ENCODE measurements at regions of chrX and their contacts with region 1.

Region 1: GRCh38 chrX:108641589-108642272 is 94.6 kb downstream of the IRS4 start:
- DNase-seq: no peak
- ATAC-seq: no peak
- H3K4me3 ChIP-seq: no peak overlapping the region
- H3K27ac ChIP-seq: no peak overlapping the region
- H3K4me1 ChIP-seq: no peaks in the 10 kb centered on the region
- H3K27me3 ChIP-seq: no peaks in the 10 kb centered on the region
- CTCF ChIP-seq: no peak
- EP300 ChIP-seq: no peak
- POLR2A ChIP-seq: no peak
- RAD21 ChIP-seq: no peak

Region 2: GRCh38 chrX:108614616-108615015 is 27.1 kb before region 1 on chrX:
- CTCF ChIA-PET with region 1: no interaction called
- POLR2A ChIA-PET with region 1: no interaction called
- in situ Hi-C with region 1: no loop called
- intact Hi-C with region 1: loop called (anchors 1 kb)
- DNase-seq: no peak
- ATAC-seq: no peak
- H3K4me3 ChIP-seq: no peak overlapping the region
- H3K27ac ChIP-seq: no peak overlapping the region
- H3K4me1 ChIP-seq: no peaks in the 10 kb centered on the region
- H3K27me3 ChIP-seq: no peaks in the 10 kb centered on the region
- CTCF ChIP-seq: no peak
- EP300 ChIP-seq: no peak
- POLR2A ChIP-seq: no peak
- RAD21 ChIP-seq: no peak